ENCODE measurements at regions of chr1 and their contacts with region 1.

Region 1: GRCh38 chr1:216765380-216766300 is 42.4 kb upstream of the ESRRG start:
- DNase-seq: no peak
- H3K4me3 ChIP-seq: no peak overlapping the region
- H3K27ac ChIP-seq: no peak overlapping the region
- H3K4me1 ChIP-seq: no peaks in the 10 kb centered on the region
- H3K27me3 ChIP-seq: no peaks in the 10 kb centered on the region
- CTCF ChIP-seq: no peak
- EP300 ChIP-seq: no peak
- POLR2A ChIP-seq: no peak

Region 2: GRCh38 chr1:216686860-216687766 is 78.5 kb before region 1 on chr1:
- in situ Hi-C with region 1: no loop called
- intact Hi-C with region 1: loop called (anchors 2 kb)
- DNase-seq: no peak
- H3K4me3 ChIP-seq: no peak overlapping the region
- H3K27ac ChIP-seq: no peak overlapping the region
- H3K4me1 ChIP-seq: peaks cover 0 to 6% (median 0%) of the 10 kb centered on the region in 4 donors
- H3K27me3 ChIP-seq: no peaks in the 10 kb centered on the region
- CTCF ChIP-seq: no peak
- EP300 ChIP-seq: no peak
- POLR2A ChIP-seq: no peak